Activated CD4-positive, alpha-beta T cell treated with anti-CD3 and anti-CD28 coated beads for 36 hours (primary cell): ENCODE measurements at regions of chr2 and their contacts with region 1.

Region 1: GRCh38 chr2:148524519-148524919 is 120.0 kb upstream of the EPC2 start:
- DNase-seq: peak; percentile 80
- ATAC-seq: peak; percentile 87
- H3K4me3 Mint-ChIP-seq: peak overlapping the region; percentile 1
- H3K27ac Mint-ChIP-seq: peak overlapping the region; percentile 84
- H3K4me1 Mint-ChIP-seq: peaks cover 86% of the 10 kb centered on the region
- H3K27me3 Mint-ChIP-seq: no peaks in the 10 kb centered on the region

Region 2: DNA sequence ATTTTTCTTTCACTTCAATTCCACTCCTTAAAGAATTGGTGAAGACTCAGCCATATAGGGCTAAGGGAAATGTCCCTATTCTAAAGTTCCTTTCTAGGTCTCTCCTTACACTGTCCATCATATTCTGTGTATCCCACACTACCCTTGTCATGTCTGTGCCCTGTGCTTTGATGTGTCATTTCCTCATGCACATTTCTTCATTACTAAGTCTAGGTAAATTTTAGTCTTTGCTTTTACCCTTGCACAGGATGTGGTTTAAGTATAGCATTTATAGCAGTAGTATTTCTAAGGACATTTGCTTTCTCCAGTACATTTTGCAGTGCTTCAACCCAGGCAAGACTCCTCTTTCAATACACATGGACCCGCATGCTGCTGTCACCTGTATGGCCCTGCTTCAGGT is 901.2 kb before region 1 on chr2:
- CTCF ChIA-PET with region 1: no interaction called
- POLR2A ChIA-PET with region 1: no interaction called
- intact Hi-C with region 1: loop called in 1 of 2 experiments (anchors 10 kb)
- DNase-seq: peak; percentile 23
- ATAC-seq: peak; percentile 99
- H3K4me3 Mint-ChIP-seq: peak overlapping the region; percentile 41
- H3K27ac Mint-ChIP-seq: peak overlapping the region; percentile 81
- H3K4me1 Mint-ChIP-seq: peaks cover 34% of the 10 kb centered on the region
- H3K27me3 Mint-ChIP-seq: no peaks in the 10 kb centered on the region

Region 3: GRCh38 chr2:148020111-148021058 is 504.1 kb before region 1 on chr2 and contains the start of gene ORC4:
- CTCF ChIA-PET with region 1: no interaction called
- POLR2A ChIA-PET with region 1: interaction called, 6 read pairs
- intact Hi-C with region 1: loop called (anchors 1 kb)
- DNase-seq: peak; percentile 99
- ATAC-seq: peak; percentile 89
- H3K4me3 Mint-ChIP-seq: peak within 1 kb of the TSS; percentile 95
- H3K27ac Mint-ChIP-seq: peak within 1 kb of the TSS; percentile 98
- H3K4me1 Mint-ChIP-seq: peaks cover 44% of the 10 kb centered on the region
- H3K27me3 Mint-ChIP-seq: no peaks in the 10 kb centered on the region
- total RNA-seq, gene ORC4: 41.2 to 41.8 TPM

Region 4: GRCh38 chr2:148603562-148603920 is 79.0 kb after region 1 on chr2:
- CTCF ChIA-PET with region 1: interaction called, 3 read pairs
- POLR2A ChIA-PET with region 1: no interaction called
- intact Hi-C with region 1: loop called (anchors 1 kb)
- DNase-seq: peak; percentile 49
- ATAC-seq: peak; percentile 92
- H3K4me3 Mint-ChIP-seq: no peak overlapping the region
- H3K27ac Mint-ChIP-seq: peak overlapping the region; percentile 88
- H3K4me1 Mint-ChIP-seq: peaks cover 18% of the 10 kb centered on the region
- H3K27me3 Mint-ChIP-seq: peaks cover 17% of the 10 kb centered on the region

Region 5: GRCh38 chr2:148874868-148875341 is 350.4 kb after region 1 on chr2 and contains the start of gene KIF5C:
- CTCF ChIA-PET with region 1: no interaction called
- POLR2A ChIA-PET with region 1: no interaction called
- intact Hi-C with region 1: loop called (anchors 5 to 10 kb)
- DNase-seq: peak; percentile 97
- ATAC-seq: peak; percentile 86
- H3K4me3 Mint-ChIP-seq: peak within 1 kb of the TSS; percentile 82
- H3K27ac Mint-ChIP-seq: peak within 1 kb of the TSS; percentile 73
- H3K4me1 Mint-ChIP-seq: peaks cover 7% of the 10 kb centered on the region
- H3K27me3 Mint-ChIP-seq: peaks cover 16% of the 10 kb centered on the region
- total RNA-seq, gene KIF5C: 13.5 to 14.1 TPM

Region 6: DNA sequence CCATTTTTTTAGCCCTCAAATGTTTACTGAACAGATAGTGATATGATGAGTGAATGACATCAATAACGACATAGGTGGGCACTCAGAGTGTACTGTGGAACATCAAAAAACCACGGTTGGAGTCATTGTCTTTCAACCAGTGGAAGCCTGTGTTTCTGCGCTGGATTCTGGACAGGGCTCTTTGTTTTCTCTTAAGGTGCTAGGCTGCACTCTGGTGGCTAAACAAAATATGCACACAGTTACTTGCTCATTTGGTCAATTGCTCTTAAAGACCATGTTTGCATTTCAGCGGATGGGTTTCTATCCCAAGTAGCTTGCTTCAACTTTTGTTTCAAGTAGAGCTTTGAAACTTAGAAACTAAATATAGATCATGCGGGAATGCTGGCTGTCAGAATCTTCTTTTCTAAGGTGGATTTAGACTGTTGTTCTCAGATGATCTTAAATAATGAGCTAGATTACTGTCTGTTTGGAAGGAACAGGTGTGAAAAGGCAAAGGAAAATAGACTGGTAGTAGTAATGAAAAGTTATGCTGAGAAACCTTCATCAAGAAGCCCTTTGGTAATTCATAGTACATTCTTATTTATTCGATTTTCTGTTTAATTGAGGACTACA is 465.5 kb after region 1 on chr2:
- CTCF ChIA-PET with region 1: interaction called, 3 read pairs
- POLR2A ChIA-PET with region 1: no interaction called
- intact Hi-C with region 1: loop called in 1 of 2 experiments (anchors 10 kb)
- DNase-seq: peak; percentile 61
- ATAC-seq: peak; percentile 82
- H3K4me3 Mint-ChIP-seq: no peak overlapping the region
- H3K27ac Mint-ChIP-seq: no peak overlapping the region
- H3K4me1 Mint-ChIP-seq: no peaks in the 10 kb centered on the region
- H3K27me3 Mint-ChIP-seq: no peaks in the 10 kb centered on the region